Activated B cell treated with CpG ODN at 0.5 μM for 24 hours (primary cell): ENCODE measurements at regions of chr10 and their contacts with region 1.

Region 1: DNA sequence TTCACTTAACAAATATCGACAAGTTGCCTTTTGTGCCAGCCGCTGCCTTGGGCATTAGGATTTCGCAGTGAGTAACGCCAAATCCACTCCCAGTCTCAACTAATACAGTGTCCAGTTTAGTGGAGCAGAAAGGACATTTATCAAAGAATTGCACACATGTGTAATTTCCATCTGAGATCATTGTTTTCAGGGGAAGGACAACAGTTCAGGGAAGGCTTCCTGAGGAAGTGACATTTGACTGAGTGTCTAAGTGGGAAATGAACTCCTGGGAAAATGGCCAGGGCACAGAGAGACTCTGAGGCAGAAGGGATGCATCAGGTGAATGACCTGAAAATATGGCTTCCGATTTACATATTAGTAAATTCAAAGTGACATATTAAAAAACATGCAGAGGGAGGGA is 89.4 kb downstream of the ITGA8 start:
- DNase-seq: no peak
- ATAC-seq: no peak
- H3K4me3 Mint-ChIP-seq: no peak overlapping the region
- H3K27ac Mint-ChIP-seq: no peak overlapping the region
- H3K4me1 Mint-ChIP-seq: no peaks in the 10 kb centered on the region
- H3K27me3 Mint-ChIP-seq: no peaks in the 10 kb centered on the region
- CTCF ChIP-seq: no peak

Region 2: GRCh38 chr10:15223174-15223573 is 407.2 kb before region 1 on chr10:
- CTCF ChIA-PET with region 1: no interaction called
- POLR2A ChIA-PET with region 1: no interaction called
- intact Hi-C with region 1: no loop called
- DNase-seq: no peak
- ATAC-seq: no peak
- H3K4me3 Mint-ChIP-seq: no peak overlapping the region
- H3K27ac Mint-ChIP-seq: no peak overlapping the region
- H3K4me1 Mint-ChIP-seq: no peaks in the 10 kb centered on the region
- H3K27me3 Mint-ChIP-seq: no peaks in the 10 kb centered on the region
- CTCF ChIP-seq: no peak

Region 3: GRCh38 chr10:15485684-15486316 is 144.6 kb before region 1 on chr10:
- CTCF ChIA-PET with region 1: no interaction called
- POLR2A ChIA-PET with region 1: no interaction called
- intact Hi-C with region 1: no loop called
- DNase-seq: no peak
- ATAC-seq: no peak
- H3K4me3 Mint-ChIP-seq: no peak overlapping the region
- H3K27ac Mint-ChIP-seq: no peak overlapping the region
- H3K4me1 Mint-ChIP-seq: no peaks in the 10 kb centered on the region
- H3K27me3 Mint-ChIP-seq: peaks cover 1% of the 10 kb centered on the region
- CTCF ChIP-seq: no peak

Region 4: DNA sequence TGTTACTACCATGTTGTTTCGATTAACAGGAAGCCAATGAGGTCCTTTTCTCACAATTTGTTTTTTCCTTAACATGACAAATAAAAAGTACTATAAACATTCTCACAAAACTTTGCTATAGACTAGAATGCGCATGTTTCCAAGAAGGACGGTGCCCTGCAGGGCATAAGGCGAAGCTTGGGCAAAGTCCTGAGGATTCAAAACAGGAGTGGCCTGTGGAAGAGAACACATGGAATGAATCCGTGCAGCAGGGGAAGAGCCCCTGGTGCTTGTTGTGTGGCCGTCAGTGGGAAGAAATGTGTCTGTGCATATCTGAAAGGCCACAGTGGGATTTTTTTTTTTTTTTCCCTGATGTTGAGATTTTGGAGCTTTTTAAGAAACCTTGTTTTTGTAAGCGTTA is 21.8 kb after region 1 on chr10:
- CTCF ChIA-PET with region 1: no interaction called
- POLR2A ChIA-PET with region 1: interaction called, 16 read pairs
- intact Hi-C with region 1: no loop called
- DNase-seq: no peak
- ATAC-seq: no peak
- H3K4me3 Mint-ChIP-seq: no peak overlapping the region
- H3K27ac Mint-ChIP-seq: no peak overlapping the region
- H3K4me1 Mint-ChIP-seq: no peaks in the 10 kb centered on the region
- H3K27me3 Mint-ChIP-seq: no peaks in the 10 kb centered on the region
- CTCF ChIP-seq: no peak